Testis (tissue), 5 donors: ENCODE measurements at regions of chr1 and their contacts with region 1.

Region 1: DNA sequence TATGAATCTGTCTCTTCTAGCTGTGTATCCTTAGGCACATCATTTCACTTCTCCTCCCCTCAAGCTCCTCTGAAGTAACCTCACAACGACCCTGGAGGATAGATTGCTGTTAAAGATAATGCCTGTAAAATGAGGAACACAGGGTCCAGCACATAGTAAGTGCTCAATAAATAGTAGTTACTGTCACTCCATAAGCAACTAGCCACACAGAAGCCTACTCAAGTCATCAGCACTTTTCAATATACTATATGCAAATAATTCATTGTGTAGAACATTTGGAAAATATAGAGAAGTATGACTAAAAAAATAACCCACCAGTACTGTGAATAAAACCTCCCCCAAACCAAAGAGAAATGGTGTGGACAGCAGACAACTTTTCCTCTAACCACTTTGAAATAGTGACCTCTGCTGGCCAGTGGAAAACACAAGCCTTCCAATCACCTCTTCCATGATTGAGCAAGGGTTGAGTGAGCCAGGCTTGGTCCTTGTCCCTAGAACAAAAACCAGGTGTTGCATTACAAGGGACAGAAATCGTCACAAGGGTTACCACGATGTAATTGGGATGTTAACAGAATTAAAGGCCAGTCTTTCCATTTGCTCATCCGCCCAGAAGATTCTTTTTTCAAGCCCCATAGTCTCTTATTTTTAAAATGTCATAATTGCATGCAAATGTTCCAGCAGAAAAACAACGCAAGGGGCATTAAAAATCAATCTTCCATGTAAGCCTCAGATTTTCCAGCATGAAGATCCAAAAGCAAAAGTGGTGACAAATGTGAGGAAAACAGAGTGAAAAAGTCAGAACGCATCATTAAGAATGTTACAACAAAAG is 15.7 kb upstream of the GLIS1 start:
- DNase-seq: peak; percentile 64
- H3K4me3 ChIP-seq: no peak overlapping the region
- H3K27ac ChIP-seq: no peak overlapping the region
- H3K4me1 ChIP-seq: no peaks in the 10 kb centered on the region
- H3K27me3 ChIP-seq: no peaks in the 10 kb centered on the region
- CTCF ChIP-seq: peak; percentile 13 to 74 (median 58)
- POLR2A ChIP-seq: no peak

Region 2: GRCh38 chr1:53485478-53486394 is 269.0 kb before region 1 on chr1:
- intact Hi-C with region 1: loop called (anchors 10 kb)
- DNase-seq: peak; percentile 88
- H3K4me3 ChIP-seq: no peak overlapping the region
- H3K27ac ChIP-seq: no peak overlapping the region
- H3K4me1 ChIP-seq: no peaks in the 10 kb centered on the region
- H3K27me3 ChIP-seq: no peaks in the 10 kb centered on the region
- CTCF ChIP-seq: peak; percentile 61 to 83 (median 79)
- POLR2A ChIP-seq: no peak